Naive thymus-derived CD4-positive, alpha-beta T cell (primary cell): ENCODE measurements at regions of chr10 and their contacts with region 1.

Region 1: GRCh38 chr10:50674469-50675254 is 50.9 kb upstream of the SGMS1 start:
- DNase-seq: no peak
- ATAC-seq: no peak
- H3K4me3 ChIP-seq: no peak overlapping the region
- H3K4me3 Mint-ChIP-seq: no peak overlapping the region
- H3K27ac ChIP-seq: no peak overlapping the region
- H3K27ac Mint-ChIP-seq: no peak overlapping the region
- H3K4me1 ChIP-seq: peaks cover 9 to 16% of the 10 kb centered on the region in 2 donors
- H3K4me1 Mint-ChIP-seq: peaks cover 4 to 22% (median 15%) of the 10 kb centered on the region in 7 donors
- H3K27me3 ChIP-seq: no peaks in the 10 kb centered on the region
- H3K27me3 Mint-ChIP-seq: no peaks in the 10 kb centered on the region

Region 2: GRCh38 chr10:50636618-50637579 is 37.8 kb before region 1 on chr10:
- CTCF ChIA-PET with region 1: no interaction called
- POLR2A ChIA-PET with region 1: no interaction called
- intact Hi-C with region 1: loop called in 1 of 2 experiments (anchors 1 kb)
- DNase-seq: peak in 3 of 9 donors; percentile 19 to 34 (median 29)
- ATAC-seq: peak; percentile 84
- H3K4me3 ChIP-seq: peak overlapping the region; percentile 41
- H3K4me3 Mint-ChIP-seq: peak overlapping the region; percentile 52 to 78 (median 72)
- H3K27ac ChIP-seq: peak overlapping the region; percentile 11
- H3K27ac Mint-ChIP-seq: peak overlapping the region; percentile 20 to 73 (median 55)
- H3K4me1 ChIP-seq: peaks cover 24 to 27% of the 10 kb centered on the region in 2 donors
- H3K4me1 Mint-ChIP-seq: peaks cover 22 to 39% (median 35%) of the 10 kb centered on the region in 7 donors
- H3K27me3 ChIP-seq: no peaks in the 10 kb centered on the region
- H3K27me3 Mint-ChIP-seq: peaks cover 0 to 56% (median 0%) of the 10 kb centered on the region in 5 donors

Region 3: DNA sequence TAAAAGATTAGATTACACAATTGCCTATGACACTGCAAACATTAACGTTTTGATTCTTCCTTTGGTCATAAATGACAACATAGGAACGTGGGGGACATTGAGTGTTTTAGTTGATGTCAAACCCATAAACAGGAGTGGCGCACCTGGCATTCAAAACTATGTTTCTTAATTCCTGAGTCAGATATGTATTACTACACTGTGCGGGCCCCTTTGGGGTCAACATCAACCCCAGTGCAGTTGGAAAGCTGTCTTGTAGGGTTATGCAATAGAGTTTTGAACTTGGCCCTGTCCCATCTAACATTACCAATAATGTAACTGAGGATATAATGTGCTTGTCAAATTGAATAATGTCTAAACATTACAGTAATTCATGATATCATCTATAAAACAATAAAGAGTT is 868.2 kb after region 1 on chr10:
- CTCF ChIA-PET with region 1: no interaction called
- POLR2A ChIA-PET with region 1: no interaction called
- intact Hi-C with region 1: no loop called
- DNase-seq: no peak
- ATAC-seq: no peak
- H3K4me3 ChIP-seq: no peak overlapping the region
- H3K4me3 Mint-ChIP-seq: no peak overlapping the region
- H3K27ac ChIP-seq: no peak overlapping the region
- H3K27ac Mint-ChIP-seq: no peak overlapping the region
- H3K4me1 ChIP-seq: no peaks in the 10 kb centered on the region
- H3K4me1 Mint-ChIP-seq: no peaks in the 10 kb centered on the region
- H3K27me3 ChIP-seq: no peaks in the 10 kb centered on the region
- H3K27me3 Mint-ChIP-seq: peaks cover 0 to 4% (median 0%) of the 10 kb centered on the region in 5 donors